ENCODE measurements at regions of chr6 and their contacts with region 1.

Region 1: DNA sequence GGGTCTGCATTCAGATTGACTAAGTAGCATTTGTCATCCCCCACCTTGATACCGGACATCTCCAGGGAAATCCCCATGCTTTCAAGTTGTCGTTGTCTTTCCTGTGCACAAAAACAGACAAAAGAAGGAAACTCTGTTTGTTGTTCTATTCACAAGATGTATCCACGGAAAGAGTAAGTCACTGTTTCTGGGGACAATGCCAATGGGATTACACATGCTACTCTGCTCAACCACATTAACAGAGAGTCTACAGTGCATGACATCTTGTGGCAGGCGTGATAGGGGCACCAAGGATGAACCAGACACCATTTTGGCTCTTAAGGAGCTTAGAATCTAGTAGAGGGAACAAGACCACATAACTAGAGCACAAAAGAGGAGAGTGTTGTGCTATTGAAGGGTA is 124.4 kb upstream of the NUP153 start:
- DNase-seq: no peak
- ATAC-seq: no peak
- H3K4me3 ChIP-seq: no peak overlapping the region
- H3K4me3 Mint-ChIP-seq: no peak overlapping the region
- H3K27ac ChIP-seq: no peak overlapping the region
- H3K27ac Mint-ChIP-seq: no peak overlapping the region
- H3K4me1 ChIP-seq: no peaks in the 10 kb centered on the region
- H3K4me1 Mint-ChIP-seq: no peaks in the 10 kb centered on the region
- H3K27me3 ChIP-seq: no peaks in the 10 kb centered on the region
- H3K27me3 Mint-ChIP-seq: no peaks in the 10 kb centered on the region
- CTCF ChIP-seq: no peak

Region 2: DNA sequence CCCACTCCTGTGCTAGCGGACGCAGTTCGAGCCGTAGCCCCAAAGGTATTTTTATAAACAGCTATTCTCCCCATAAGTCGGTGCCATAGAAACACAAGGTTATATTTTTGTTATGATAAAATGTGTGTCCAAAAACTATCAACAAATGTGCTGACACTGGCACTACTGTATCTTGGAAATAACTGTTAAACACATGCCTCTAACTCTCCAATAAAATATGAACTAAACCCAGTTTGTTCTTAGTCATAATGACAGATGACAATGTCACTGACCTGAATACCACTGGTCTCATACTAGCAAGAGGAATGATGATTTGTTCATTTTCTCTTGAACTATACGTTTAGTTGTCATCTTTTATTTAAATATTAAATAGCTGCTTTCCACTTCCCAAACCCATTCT is 73.0 kb before region 1 on chr6:
- intact Hi-C with region 1: no loop called
- DNase-seq: no peak
- ATAC-seq: no peak
- H3K4me3 ChIP-seq: no peak overlapping the region
- H3K4me3 Mint-ChIP-seq: no peak overlapping the region
- H3K27ac ChIP-seq: no peak overlapping the region
- H3K27ac Mint-ChIP-seq: no peak overlapping the region
- H3K4me1 ChIP-seq: no peaks in the 10 kb centered on the region
- H3K4me1 Mint-ChIP-seq: no peaks in the 10 kb centered on the region
- H3K27me3 ChIP-seq: no peaks in the 10 kb centered on the region
- H3K27me3 Mint-ChIP-seq: no peaks in the 10 kb centered on the region
- CTCF ChIP-seq: no peak

Region 3: GRCh38 chr6:17957498-17957897 is 126.4 kb after region 1 on chr6:
- intact Hi-C with region 1: no loop called
- DNase-seq: peak; percentile 2 to 41
- ATAC-seq: peak; percentile 88 to 95 (median 90)
- H3K4me3 ChIP-seq: no peak overlapping the region
- H3K4me3 Mint-ChIP-seq: peak overlapping the region; percentile 28
- H3K27ac ChIP-seq: peak overlapping the region; percentile 42
- H3K27ac Mint-ChIP-seq: peak overlapping the region; percentile 90 to 95
- H3K4me1 ChIP-seq: peaks cover 5% of the 10 kb centered on the region
- H3K4me1 Mint-ChIP-seq: peaks cover 34 to 35% of the 10 kb centered on the region in 2 donors
- H3K27me3 ChIP-seq: no peaks in the 10 kb centered on the region
- H3K27me3 Mint-ChIP-seq: no peaks in the 10 kb centered on the region
- CTCF ChIP-seq: no peak

Region 4: GRCh38 chr6:18122124-18123093 is 291.3 kb after region 1 on chr6 and contains the start of gene NHLRC1:
- intact Hi-C with region 1: loop called (anchors 1 kb)
- DNase-seq: peak; percentile 81 to 84
- ATAC-seq: peak; percentile 99 to 100 (median 99)
- H3K4me3 ChIP-seq: peak within 1 kb of the TSS; percentile 38
- H3K4me3 Mint-ChIP-seq: peak within 1 kb of the TSS; percentile 91
- H3K27ac ChIP-seq: no peak within 1 kb of the TSS
- H3K27ac Mint-ChIP-seq: peak within 1 kb of the TSS; percentile 43 to 90
- H3K4me1 ChIP-seq: peaks cover 13% of the 10 kb centered on the region
- H3K4me1 Mint-ChIP-seq: peaks cover 8 to 13% of the 10 kb centered on the region in 2 donors
- H3K27me3 ChIP-seq: no peaks in the 10 kb centered on the region
- H3K27me3 Mint-ChIP-seq: no peaks in the 10 kb centered on the region
- CTCF ChIP-seq: peak; percentile 81
- total RNA-seq, gene NHLRC1: 0.58 to 0.89 (median 0.68) TPM

Measured in natural killer cell (primary cell).